ENCODE measurements at regions of chr11 and their contacts with region 1.

Region 1: DNA sequence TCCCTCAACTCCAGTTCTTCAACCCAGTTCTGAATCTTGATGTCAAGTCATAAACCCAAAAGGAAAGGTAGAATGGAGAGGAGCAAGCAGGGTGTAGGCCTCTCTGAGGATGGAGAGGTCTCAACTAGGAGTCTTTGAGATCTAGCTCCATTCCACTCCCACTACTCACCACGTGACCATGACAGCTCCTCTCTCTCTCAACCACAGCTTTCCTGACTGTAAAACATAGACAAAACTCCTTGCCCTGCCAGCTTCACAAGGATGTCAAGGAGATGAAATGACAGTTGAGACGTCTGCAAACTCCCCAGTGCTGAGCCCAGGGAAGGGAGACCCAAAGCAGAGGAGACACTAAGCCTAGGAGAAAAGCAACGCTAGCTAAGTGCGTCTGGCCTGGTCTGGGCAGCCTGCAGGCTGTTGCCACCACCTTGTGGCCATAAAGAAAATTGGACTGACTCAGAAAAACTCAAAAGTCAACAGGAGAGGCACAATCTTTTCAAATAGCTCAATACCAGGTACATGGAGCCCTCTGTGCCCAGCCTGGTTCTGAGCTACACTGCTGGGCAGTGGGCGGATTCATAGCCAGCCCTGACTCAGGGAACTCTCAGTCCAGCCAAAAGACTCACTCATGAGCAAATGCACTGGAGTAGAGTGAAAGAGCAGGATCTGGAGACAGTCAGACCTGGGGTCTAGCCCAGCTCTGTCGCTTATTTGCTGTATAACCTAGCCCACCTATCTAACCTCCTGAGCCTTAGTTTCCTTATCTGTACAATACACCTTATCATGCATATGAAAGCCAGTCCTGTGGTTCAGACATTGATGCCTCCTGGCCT is 3.4 kb downstream of the CLPB start:
- DNase-seq: peak; percentile 35
- H3K4me3 Mint-ChIP-seq: peak overlapping the region; percentile 39
- H3K27ac Mint-ChIP-seq: no peak overlapping the region
- H3K4me1 Mint-ChIP-seq: peaks cover 33% of the 10 kb centered on the region
- H3K27me3 Mint-ChIP-seq: no peaks in the 10 kb centered on the region

Region 2: DNA sequence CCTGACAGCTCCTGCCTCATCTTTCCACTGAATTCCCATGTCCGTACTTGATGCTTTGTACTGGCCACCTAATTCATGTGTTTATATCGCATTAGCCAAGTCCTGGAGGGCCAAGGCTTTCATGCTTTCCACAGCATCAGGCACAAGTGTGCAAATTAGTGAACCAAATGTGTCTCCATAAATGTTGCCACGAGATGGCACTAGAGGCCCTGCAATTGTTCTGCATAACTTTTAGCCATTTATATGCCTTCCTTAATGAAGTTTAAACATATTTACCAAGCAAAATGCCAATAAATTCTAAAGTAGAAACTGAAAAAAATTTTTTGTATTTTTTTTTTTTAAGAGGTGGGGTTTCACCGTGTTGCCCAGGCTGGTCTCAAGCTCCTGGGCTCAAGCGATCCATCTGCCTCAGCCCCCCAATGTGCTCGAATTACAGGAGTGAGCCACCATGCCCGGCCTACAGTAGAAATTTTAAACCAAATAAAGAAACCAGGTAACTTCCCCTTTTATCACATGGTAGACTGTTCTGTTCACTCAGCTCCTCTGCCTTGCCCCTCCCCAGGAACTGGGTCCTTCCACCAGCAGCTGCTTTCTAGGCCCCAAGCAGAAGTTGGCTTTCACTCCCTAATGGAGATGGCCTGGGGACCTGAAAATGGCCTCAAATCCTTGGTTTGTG is 453.1 kb before region 1 on chr11:
- intact Hi-C with region 1: loop called (anchors 5 kb)
- DNase-seq: peak; percentile 39
- H3K4me3 Mint-ChIP-seq: no peak overlapping the region
- H3K27ac Mint-ChIP-seq: no peak overlapping the region
- H3K4me1 Mint-ChIP-seq: peaks cover 2% of the 10 kb centered on the region
- H3K27me3 Mint-ChIP-seq: no peaks in the 10 kb centered on the region

Region 3: GRCh38 chr11:72238040-72238450 is 192.9 kb before region 1 on chr11:
- intact Hi-C with region 1: loop called (anchors 5 kb)
- DNase-seq: peak; percentile 36
- H3K4me3 Mint-ChIP-seq: no peak overlapping the region
- H3K27ac Mint-ChIP-seq: no peak overlapping the region
- H3K4me1 Mint-ChIP-seq: peaks cover 14% of the 10 kb centered on the region
- H3K27me3 Mint-ChIP-seq: peaks cover 36% of the 10 kb centered on the region

Region 4: DNA sequence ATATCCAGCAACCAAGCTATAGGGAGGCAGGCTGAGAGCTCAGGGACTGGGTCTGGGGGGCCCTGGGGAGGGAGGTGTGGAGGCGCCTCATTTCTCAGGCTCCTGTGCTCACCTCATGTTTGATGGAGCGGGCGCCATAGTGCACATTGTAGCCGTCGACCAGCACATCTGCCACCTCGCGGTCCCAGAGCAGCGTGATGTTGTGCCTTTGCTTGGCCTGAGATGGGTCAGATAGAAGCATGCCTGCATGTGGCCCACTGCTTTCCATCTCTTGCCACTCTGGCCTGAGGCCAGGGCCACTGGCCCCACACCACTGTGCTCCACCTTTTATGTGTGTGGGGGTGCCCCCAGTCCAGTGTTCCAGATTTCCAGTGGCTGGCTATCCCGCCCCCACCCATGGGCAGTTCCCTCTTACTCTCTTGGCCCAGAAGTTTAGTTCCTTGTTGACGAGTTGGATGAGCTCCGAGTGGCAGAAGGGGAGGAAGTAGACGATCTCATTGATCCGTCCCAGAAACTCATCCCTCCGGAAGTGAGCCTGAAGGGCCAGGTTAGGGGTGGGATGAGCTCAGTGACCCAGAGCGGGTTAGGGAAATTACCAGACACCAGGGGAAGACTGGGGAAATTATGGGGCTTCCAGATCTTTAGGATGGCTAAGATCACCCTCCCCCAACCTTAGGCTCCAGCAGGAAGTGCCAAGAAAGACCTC is 136.9 kb before region 1 on chr11:
- intact Hi-C with region 1: loop called (anchors 5 kb)
- DNase-seq: no peak
- H3K4me3 Mint-ChIP-seq: no peak overlapping the region
- H3K27ac Mint-ChIP-seq: no peak overlapping the region
- H3K4me1 Mint-ChIP-seq: no peaks in the 10 kb centered on the region
- H3K27me3 Mint-ChIP-seq: no peaks in the 10 kb centered on the region

Region 5: DNA sequence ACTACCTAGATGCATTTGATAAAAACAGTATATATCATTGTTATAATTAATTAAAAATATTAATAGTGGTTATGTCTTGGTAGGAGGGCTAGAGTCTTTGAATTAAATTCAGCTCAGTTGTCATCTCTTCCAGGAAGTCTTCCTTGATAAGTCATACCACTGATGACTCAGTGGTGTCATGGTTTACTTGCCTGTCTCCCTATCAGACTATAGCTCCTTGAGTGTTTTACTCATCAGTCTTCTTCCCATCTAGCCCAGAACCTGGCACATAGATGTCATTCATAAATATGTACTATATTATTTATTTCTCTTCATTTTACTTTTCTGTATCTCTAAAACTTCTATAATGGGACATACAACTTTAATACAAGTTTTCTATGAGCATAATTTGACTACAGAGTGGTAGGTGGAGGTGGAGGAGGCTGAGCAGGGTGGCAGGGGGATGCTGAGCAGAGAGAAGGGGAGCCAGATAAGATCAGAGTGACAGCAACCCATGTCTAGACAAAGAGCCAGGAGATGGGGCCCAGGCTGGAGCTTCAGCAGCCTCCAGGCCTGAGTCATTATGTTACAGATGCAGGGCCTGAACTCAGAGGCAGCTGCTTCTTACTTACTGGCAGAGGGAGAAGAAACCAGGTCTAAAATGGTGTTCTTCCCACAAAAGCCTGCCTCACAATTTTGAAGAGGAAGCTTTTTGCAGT is 104.7 kb before region 1 on chr11:
- intact Hi-C with region 1: loop called (anchors 1 kb)
- DNase-seq: no peak
- H3K4me3 Mint-ChIP-seq: peak overlapping the region; percentile 11
- H3K27ac Mint-ChIP-seq: peak overlapping the region; percentile 96
- H3K4me1 Mint-ChIP-seq: peaks cover 45% of the 10 kb centered on the region
- H3K27me3 Mint-ChIP-seq: no peaks in the 10 kb centered on the region